B cell (primary cell): ENCODE measurements at regions of chr7 and their contacts with region 1.

Region 1: DNA sequence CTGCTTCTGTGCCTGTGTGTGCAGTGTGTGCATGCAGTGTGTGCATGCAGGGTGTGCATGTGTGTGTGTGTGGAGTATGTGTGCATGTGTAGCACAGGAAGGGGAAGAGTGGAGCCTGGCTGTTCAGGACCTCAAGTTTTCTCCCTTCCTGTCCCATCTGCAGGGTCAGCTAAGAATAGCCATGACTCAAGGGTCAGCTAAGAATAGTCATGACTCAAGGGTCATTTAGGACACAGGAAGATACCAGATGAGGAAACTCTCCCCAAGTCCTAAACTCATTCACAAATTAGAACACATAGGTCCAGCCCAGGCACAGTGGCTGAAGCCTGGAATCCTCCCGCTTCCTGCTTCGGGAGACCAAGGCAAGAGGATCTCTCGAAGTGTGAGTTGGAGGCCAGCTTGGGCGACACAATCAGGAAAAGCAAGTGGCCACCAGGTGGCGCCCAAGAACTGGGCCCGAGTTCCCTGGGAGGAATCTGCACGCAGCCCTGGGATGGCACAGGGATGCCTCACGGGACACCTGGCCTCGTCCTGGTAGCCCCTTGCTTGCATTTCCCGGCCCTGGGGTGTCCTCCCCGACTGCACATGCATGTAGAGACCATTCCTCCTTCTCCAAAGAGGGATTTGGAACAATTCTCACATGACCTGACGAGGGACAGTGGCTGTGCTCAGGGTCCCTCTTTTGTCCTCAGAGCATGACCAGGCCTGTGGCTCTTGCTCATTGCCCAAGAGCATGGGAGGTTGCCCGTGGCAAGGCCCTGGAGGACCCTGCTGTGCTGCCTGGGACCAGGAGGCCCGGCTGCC is 21.4 kb upstream of the VOPP1 start:
- DNase-seq: peak; percentile 65
- ATAC-seq: peak; percentile 32
- H3K4me3 ChIP-seq: no peak overlapping the region
- H3K4me3 Mint-ChIP-seq: no peak overlapping the region
- H3K27ac ChIP-seq: no peak overlapping the region
- H3K27ac Mint-ChIP-seq: no peak overlapping the region
- H3K4me1 ChIP-seq: peaks cover 2 to 27% of the 10 kb centered on the region in 2 donors
- H3K4me1 Mint-ChIP-seq: peaks cover 36% of the 10 kb centered on the region
- H3K27me3 ChIP-seq: peaks cover 0 to 4% (median 0%) of the 10 kb centered on the region in 4 experiments
- H3K27me3 Mint-ChIP-seq: no peaks in the 10 kb centered on the region
- CTCF ChIP-seq: peak; percentile 89

Region 2: GRCh38 chr7:54581511-54581910 is 1012.2 kb before region 1 on chr7:
- CTCF ChIA-PET with region 1: no interaction called
- POLR2A ChIA-PET with region 1: no interaction called
- intact Hi-C with region 1: no loop called
- DNase-seq: no peak
- ATAC-seq: no peak
- H3K4me3 ChIP-seq: no peak overlapping the region
- H3K4me3 Mint-ChIP-seq: no peak overlapping the region
- H3K27ac ChIP-seq: no peak overlapping the region
- H3K27ac Mint-ChIP-seq: no peak overlapping the region
- H3K4me1 ChIP-seq: no peaks in the 10 kb centered on the region
- H3K4me1 Mint-ChIP-seq: no peaks in the 10 kb centered on the region
- H3K27me3 ChIP-seq: no peaks in the 10 kb centered on the region
- H3K27me3 Mint-ChIP-seq: no peaks in the 10 kb centered on the region
- CTCF ChIP-seq: no peak

Region 3: DNA sequence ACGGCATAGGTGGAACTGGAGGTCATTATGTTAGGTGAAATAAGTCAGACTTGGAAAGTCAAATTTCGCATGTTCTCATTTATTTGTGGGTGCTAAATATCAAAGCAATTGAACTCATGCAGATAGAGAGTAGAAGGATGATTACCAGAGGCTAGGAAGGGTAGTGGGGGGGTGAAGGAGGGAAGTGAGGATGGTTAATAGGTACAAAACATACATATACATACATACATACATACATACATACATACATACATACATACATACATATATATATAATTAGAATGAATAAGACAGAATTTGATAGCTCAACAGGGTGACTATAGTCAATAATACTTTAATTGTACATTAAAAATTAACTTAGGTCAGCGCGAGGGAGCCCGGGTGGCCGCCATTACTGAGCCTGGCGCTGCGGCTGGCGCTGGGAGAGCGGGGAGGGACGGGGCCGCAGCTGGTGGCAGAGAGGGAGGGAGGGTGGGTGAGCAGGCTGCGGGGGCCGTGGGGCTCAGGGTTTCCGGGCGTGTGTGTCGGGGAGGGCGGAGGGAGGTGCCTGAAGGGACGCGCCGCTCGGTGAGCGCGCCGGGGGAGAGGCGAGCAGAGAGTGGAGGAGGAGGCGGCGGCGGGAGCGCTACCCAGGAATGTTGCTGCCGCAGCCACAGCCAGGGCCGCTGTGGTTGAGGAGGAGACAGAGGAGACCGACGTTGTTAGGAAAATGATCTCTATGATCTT is 660.7 kb before region 1 on chr7:
- CTCF ChIA-PET with region 1: no interaction called
- POLR2A ChIA-PET with region 1: no interaction called
- intact Hi-C with region 1: no loop called
- DNase-seq: no peak
- ATAC-seq: no peak
- H3K4me3 ChIP-seq: no peak overlapping the region
- H3K4me3 Mint-ChIP-seq: no peak overlapping the region
- H3K27ac ChIP-seq: no peak overlapping the region
- H3K27ac Mint-ChIP-seq: no peak overlapping the region
- H3K4me1 ChIP-seq: no peaks in the 10 kb centered on the region
- H3K4me1 Mint-ChIP-seq: no peaks in the 10 kb centered on the region
- H3K27me3 ChIP-seq: peaks cover 0 to 3% (median 0%) of the 10 kb centered on the region in 4 experiments
- H3K27me3 Mint-ChIP-seq: peaks cover 60% of the 10 kb centered on the region
- CTCF ChIP-seq: no peak

Region 4: DNA sequence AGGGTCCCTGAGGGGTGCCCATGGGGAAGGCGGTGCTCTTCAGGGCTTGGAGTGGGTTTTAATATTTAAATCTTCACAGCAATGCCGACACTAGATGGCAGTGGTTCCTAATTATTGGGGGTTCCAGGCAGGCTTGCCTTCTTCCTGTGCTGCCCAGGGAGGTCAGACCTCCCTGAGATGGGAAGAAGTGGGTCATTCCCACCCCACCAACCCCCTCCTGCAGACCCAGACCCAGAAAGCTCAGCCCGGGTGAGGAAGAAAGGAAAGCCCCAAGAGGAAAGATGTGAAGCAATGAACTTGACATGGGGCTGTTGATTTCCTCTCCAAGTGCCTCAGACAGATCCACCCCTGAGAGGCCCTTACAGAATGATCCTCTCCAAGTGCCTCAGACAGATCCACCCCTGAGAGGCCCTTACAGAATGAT is 313.7 kb before region 1 on chr7:
- CTCF ChIA-PET with region 1: interaction called, 9 read pairs
- POLR2A ChIA-PET with region 1: no interaction called
- intact Hi-C with region 1: loop called (anchors 10 kb)
- DNase-seq: peak; percentile 69
- ATAC-seq: peak; percentile 73
- H3K4me3 ChIP-seq: no peak overlapping the region
- H3K4me3 Mint-ChIP-seq: no peak overlapping the region
- H3K27ac ChIP-seq: no peak overlapping the region
- H3K27ac Mint-ChIP-seq: no peak overlapping the region
- H3K4me1 ChIP-seq: no peaks in the 10 kb centered on the region
- H3K4me1 Mint-ChIP-seq: no peaks in the 10 kb centered on the region
- H3K27me3 ChIP-seq: peaks cover 0 to 3% (median 0%) of the 10 kb centered on the region in 4 experiments
- H3K27me3 Mint-ChIP-seq: peaks cover 4% of the 10 kb centered on the region
- CTCF ChIP-seq: peak; percentile 68

Region 5: GRCh38 chr7:55415173-55415778 is 178.4 kb before region 1 on chr7:
- CTCF ChIA-PET with region 1: interaction called, 5 read pairs
- POLR2A ChIA-PET with region 1: no interaction called
- intact Hi-C with region 1: loop called (anchors 5 kb)
- DNase-seq: peak; percentile 81
- ATAC-seq: peak; percentile 96
- H3K4me3 ChIP-seq: no peak overlapping the region
- H3K4me3 Mint-ChIP-seq: no peak overlapping the region
- H3K27ac ChIP-seq: no peak overlapping the region
- H3K27ac Mint-ChIP-seq: no peak overlapping the region
- H3K4me1 ChIP-seq: no peaks in the 10 kb centered on the region
- H3K4me1 Mint-ChIP-seq: peaks cover 2% of the 10 kb centered on the region
- H3K27me3 ChIP-seq: no peaks in the 10 kb centered on the region
- H3K27me3 Mint-ChIP-seq: no peaks in the 10 kb centered on the region
- CTCF ChIP-seq: peak; percentile 88

Region 6: GRCh38 chr7:55432939-55433784 is 160.6 kb before region 1 on chr7:
- CTCF ChIA-PET with region 1: interaction called, 27 read pairs
- POLR2A ChIA-PET with region 1: no interaction called
- intact Hi-C with region 1: no loop called
- DNase-seq: peak; percentile 39
- ATAC-seq: peak; percentile 60
- H3K4me3 ChIP-seq: no peak overlapping the region
- H3K4me3 Mint-ChIP-seq: no peak overlapping the region
- H3K27ac ChIP-seq: no peak overlapping the region
- H3K27ac Mint-ChIP-seq: no peak overlapping the region
- H3K4me1 ChIP-seq: no peaks in the 10 kb centered on the region
- H3K4me1 Mint-ChIP-seq: peaks cover 3% of the 10 kb centered on the region
- H3K27me3 ChIP-seq: no peaks in the 10 kb centered on the region
- H3K27me3 Mint-ChIP-seq: no peaks in the 10 kb centered on the region
- CTCF ChIP-seq: peak; percentile 71

Region 7: GRCh38 chr7:55444786-55445185 is 148.9 kb before region 1 on chr7:
- CTCF ChIA-PET with region 1: no interaction called
- POLR2A ChIA-PET with region 1: no interaction called
- intact Hi-C with region 1: no loop called
- DNase-seq: no peak
- ATAC-seq: no peak
- H3K4me3 ChIP-seq: no peak overlapping the region
- H3K4me3 Mint-ChIP-seq: no peak overlapping the region
- H3K27ac ChIP-seq: no peak overlapping the region
- H3K27ac Mint-ChIP-seq: peak overlapping the region; percentile 6
- H3K4me1 ChIP-seq: no peaks in the 10 kb centered on the region
- H3K4me1 Mint-ChIP-seq: peaks cover 2% of the 10 kb centered on the region
- H3K27me3 ChIP-seq: no peaks in the 10 kb centered on the region
- H3K27me3 Mint-ChIP-seq: no peaks in the 10 kb centered on the region
- CTCF ChIP-seq: no peak

Region 8: GRCh38 chr7:55509322-55509721 is 84.4 kb before region 1 on chr7:
- CTCF ChIA-PET with region 1: interaction called, 9 read pairs
- POLR2A ChIA-PET with region 1: no interaction called
- intact Hi-C with region 1: loop called (anchors 1 kb)
- DNase-seq: peak; percentile 26
- ATAC-seq: peak; percentile 31
- H3K4me3 ChIP-seq: no peak overlapping the region
- H3K4me3 Mint-ChIP-seq: no peak overlapping the region
- H3K27ac ChIP-seq: no peak overlapping the region
- H3K27ac Mint-ChIP-seq: peak overlapping the region; percentile 70
- H3K4me1 ChIP-seq: peaks cover 14 to 64% of the 10 kb centered on the region in 2 donors
- H3K4me1 Mint-ChIP-seq: peaks cover 67% of the 10 kb centered on the region
- H3K27me3 ChIP-seq: no peaks in the 10 kb centered on the region
- H3K27me3 Mint-ChIP-seq: no peaks in the 10 kb centered on the region
- CTCF ChIP-seq: no peak

Region 9: DNA sequence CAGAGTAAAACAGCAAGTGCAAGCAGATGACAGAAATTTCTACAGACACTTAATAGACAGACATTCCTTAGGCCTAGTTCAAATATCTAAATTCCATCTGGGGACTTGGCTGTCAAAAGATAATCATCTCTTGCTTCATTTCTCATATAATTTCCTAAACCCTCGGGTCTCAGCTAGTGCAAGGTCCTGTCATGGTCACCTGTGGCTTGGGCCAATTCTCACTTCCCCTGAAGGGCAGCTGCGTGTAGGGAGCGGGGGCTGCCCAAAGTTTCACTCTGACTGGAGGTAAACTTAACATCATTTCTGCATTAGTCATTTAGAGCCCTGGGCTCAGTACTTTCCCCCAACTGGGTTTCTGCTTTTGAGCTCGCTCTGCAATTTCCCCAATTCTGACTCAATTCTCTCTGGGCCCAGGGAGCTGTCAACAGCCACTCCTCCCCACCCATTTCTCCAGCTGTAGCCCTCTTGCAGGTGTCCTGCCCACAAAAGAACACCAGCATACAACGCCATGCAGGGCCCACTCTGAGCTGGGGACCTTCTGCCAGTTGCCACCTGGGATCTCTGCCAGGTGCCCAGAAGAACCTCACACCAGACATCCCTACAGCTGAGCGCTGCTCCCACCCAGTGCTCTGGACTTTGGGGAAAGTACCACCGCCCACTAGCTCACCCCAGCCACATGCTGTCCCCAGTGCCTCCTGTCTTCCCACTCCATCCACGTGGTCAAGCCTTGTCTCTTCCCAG is 59.4 kb before region 1 on chr7:
- CTCF ChIA-PET with region 1: interaction called, 28 read pairs
- POLR2A ChIA-PET with region 1: interaction called, 3 read pairs
- intact Hi-C with region 1: no loop called
- DNase-seq: peak; percentile 94
- ATAC-seq: peak; percentile 67
- H3K4me3 ChIP-seq: peak overlapping the region; percentile 2 to 59 (median 34)
- H3K4me3 Mint-ChIP-seq: peak overlapping the region; percentile 83
- H3K27ac ChIP-seq: peak overlapping the region; percentile 100
- H3K27ac Mint-ChIP-seq: peak overlapping the region; percentile 99
- H3K4me1 ChIP-seq: peaks cover 75 to 94% of the 10 kb centered on the region in 2 donors
- H3K4me1 Mint-ChIP-seq: peaks cover 94% of the 10 kb centered on the region
- H3K27me3 ChIP-seq: no peaks in the 10 kb centered on the region
- H3K27me3 Mint-ChIP-seq: no peaks in the 10 kb centered on the region
- CTCF ChIP-seq: no peak

Region 10: GRCh38 chr7:55572378-55573233 is 21.1 kb before region 1 on chr7 and contains the start of gene VOPP1:
- CTCF ChIA-PET with region 1: interaction called, 11 read pairs
- POLR2A ChIA-PET with region 1: interaction called, 4 read pairs
- intact Hi-C with region 1: no loop called
- DNase-seq: peak; percentile 85
- ATAC-seq: peak; percentile 70
- H3K4me3 ChIP-seq: peak within 1 kb of the TSS; percentile 32 to 97 (median 79)
- H3K4me3 Mint-ChIP-seq: peak within 1 kb of the TSS; percentile 91
- H3K27ac ChIP-seq: peak within 1 kb of the TSS; percentile 74 to 85
- H3K27ac Mint-ChIP-seq: peak within 1 kb of the TSS; percentile 96
- H3K4me1 ChIP-seq: peaks cover 49 to 57% of the 10 kb centered on the region in 2 donors
- H3K4me1 Mint-ChIP-seq: peaks cover 49% of the 10 kb centered on the region
- H3K27me3 ChIP-seq: no peaks in the 10 kb centered on the region
- H3K27me3 Mint-ChIP-seq: no peaks in the 10 kb centered on the region
- CTCF ChIP-seq: no peak
- total RNA-seq, gene VOPP1: 256 and 267 TPM in 2 replicates